Activated naive CD4-positive, alpha-beta T cell treated with anti-CD3 and anti-CD28 coated beads for 36 hours (primary cell): ENCODE measurements at regions of chr20 and their contacts with region 1.

Region 1: GRCh38 chr20:5714261-5715041 is 35.8 kb upstream of the SHLD1 start:
- DNase-seq: peak; percentile 75
- H3K4me3 Mint-ChIP-seq: no peak overlapping the region
- H3K27ac Mint-ChIP-seq: peak overlapping the region; percentile 72
- H3K4me1 Mint-ChIP-seq: peaks cover 28% of the 10 kb centered on the region
- H3K27me3 Mint-ChIP-seq: no peaks in the 10 kb centered on the region

Region 2: GRCh38 chr20:5658912-5659345 is 55.5 kb before region 1 on chr20:
- CTCF ChIA-PET with region 1: no interaction called
- intact Hi-C with region 1: loop called (anchors 2 kb)
- DNase-seq: peak; percentile 84
- H3K4me3 Mint-ChIP-seq: no peak overlapping the region
- H3K27ac Mint-ChIP-seq: no peak overlapping the region
- H3K4me1 Mint-ChIP-seq: peaks cover 18% of the 10 kb centered on the region
- H3K27me3 Mint-ChIP-seq: no peaks in the 10 kb centered on the region

Region 3: GRCh38 chr20:5735845-5736525 is 21.5 kb after region 1 on chr20:
- CTCF ChIA-PET with region 1: interaction called, 3 read pairs
- intact Hi-C with region 1: loop called (anchors 1 kb)
- DNase-seq: no peak
- H3K4me3 Mint-ChIP-seq: no peak overlapping the region
- H3K27ac Mint-ChIP-seq: no peak overlapping the region
- H3K4me1 Mint-ChIP-seq: peaks cover 28% of the 10 kb centered on the region
- H3K27me3 Mint-ChIP-seq: no peaks in the 10 kb centered on the region

Region 4: DNA sequence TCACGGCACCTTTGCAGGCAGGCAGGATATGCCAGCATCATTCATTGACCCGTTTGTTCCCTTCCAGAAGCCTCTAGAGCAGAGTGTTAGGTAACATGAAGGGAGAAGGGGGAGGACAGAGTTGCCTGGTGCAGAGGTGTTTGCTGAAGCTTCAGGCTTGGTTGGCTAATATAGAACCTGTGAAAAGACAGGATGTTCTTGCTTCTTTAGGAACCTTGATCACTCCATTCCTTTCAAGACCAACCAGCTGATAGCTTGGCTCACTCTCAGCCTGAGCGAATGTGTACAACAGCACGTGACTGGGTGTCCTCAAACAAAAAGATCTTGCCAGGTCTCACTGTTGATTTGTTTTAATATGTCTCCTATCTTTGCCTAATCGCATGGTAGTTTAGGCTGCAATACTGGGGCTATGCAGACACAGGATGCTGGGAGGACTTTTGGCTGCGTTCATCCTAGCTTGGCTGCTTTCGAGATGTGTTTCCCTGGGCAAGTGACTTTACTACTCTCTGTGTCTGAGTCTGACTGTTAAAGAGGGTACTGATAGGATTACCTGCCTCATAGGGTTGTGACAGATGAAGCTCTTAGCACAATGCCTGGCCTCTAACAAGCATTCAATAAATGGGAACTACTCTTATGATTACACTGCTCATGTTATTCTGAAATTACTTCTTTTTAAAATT is 51.8 kb after region 1 on chr20:
- CTCF ChIA-PET with region 1: no interaction called
- intact Hi-C with region 1: loop called (anchors 2 kb)
- DNase-seq: no peak
- H3K4me3 Mint-ChIP-seq: no peak overlapping the region
- H3K27ac Mint-ChIP-seq: no peak overlapping the region
- H3K4me1 Mint-ChIP-seq: peaks cover 16% of the 10 kb centered on the region
- H3K27me3 Mint-ChIP-seq: no peaks in the 10 kb centered on the region

Region 5: GRCh38 chr20:5844063-5844681 is 129.7 kb after region 1 on chr20:
- CTCF ChIA-PET with region 1: no interaction called
- intact Hi-C with region 1: no loop called
- DNase-seq: peak; percentile 76
- H3K4me3 Mint-ChIP-seq: no peak overlapping the region
- H3K27ac Mint-ChIP-seq: peak overlapping the region; percentile 78
- H3K4me1 Mint-ChIP-seq: peaks cover 34% of the 10 kb centered on the region
- H3K27me3 Mint-ChIP-seq: no peaks in the 10 kb centered on the region